Breast epithelium (tissue), 4 donors: ENCODE measurements at regions of chr3 and their contacts with region 1.

Region 1: DNA sequence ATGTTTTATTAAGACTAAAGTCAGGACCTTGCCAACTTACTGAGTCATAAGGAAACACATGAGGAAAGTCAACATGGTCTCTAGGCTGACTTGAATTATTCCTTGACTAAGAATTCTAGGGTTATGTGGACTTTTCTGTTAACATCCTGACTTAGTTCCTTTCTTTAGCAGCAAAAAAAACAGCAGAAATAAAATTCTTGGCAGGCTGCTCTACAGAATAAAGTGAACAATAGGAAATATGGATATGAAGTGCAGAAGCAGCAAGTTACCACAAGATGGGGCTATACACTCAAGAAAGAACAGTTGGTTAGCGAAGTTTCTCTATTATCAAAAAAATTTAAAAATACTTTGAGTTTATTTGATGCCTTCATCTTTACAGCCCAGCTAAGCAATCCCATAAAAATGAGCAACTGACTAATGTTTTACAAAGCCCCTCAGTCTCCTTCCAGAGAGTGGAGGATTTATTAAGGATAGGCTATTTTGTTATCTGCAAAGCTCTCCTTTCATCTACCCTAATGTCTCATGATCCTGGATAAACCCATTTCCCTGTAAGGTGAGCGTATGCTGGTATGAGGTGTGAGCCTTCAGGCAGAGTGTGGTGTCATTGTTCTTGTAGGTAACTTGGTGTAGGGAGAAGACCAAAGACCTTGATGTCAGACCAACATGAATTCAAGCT is 23.1 kb upstream of the MCCC1 start:
- DNase-seq: no peak
- H3K4me3 ChIP-seq: no peak overlapping the region
- H3K27ac ChIP-seq: no peak overlapping the region
- H3K4me1 ChIP-seq: no peaks in the 10 kb centered on the region
- H3K27me3 ChIP-seq: peaks cover 0 to 12% of the 10 kb centered on the region in 2 donors
- CTCF ChIP-seq: peak in 2 of 3 donors; percentile 83 to 85
- POLR2A ChIP-seq: no peak

Region 2: DNA sequence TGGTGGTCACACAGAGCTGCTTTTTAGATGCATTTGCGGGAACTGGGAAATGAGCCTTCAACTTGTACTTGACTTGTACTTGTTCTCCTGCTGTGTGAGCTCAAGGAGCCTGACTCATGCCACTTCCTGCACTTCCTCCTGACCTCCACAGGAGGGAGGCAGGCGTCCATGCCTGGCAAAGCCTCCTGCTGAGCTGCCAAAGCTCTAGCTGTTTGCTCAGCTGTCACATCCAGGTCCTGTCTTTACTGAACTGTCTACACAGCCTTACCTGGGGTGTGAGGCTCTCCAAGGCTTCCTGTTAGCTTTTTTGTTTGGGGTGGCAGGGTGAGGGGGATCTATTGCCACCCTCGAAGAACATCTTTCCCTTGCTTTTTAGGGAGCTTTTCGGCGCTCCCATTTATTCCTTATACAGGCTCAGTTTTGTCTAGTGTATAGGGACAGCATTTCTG is 1249.2 kb after region 1 on chr3:
- intact Hi-C with region 1: loop called (anchors 10 kb)
- DNase-seq: peak; percentile 70 to 80
- H3K4me3 ChIP-seq: no peak overlapping the region
- H3K27ac ChIP-seq: no peak overlapping the region
- H3K4me1 ChIP-seq: no peaks in the 10 kb centered on the region
- H3K27me3 ChIP-seq: no peaks in the 10 kb centered on the region
- CTCF ChIP-seq: peak; percentile 85 to 95 (median 94)
- POLR2A ChIP-seq: no peak